ENCODE measurements at regions of chr19 and their contacts with region 1.

Region 1: GRCh38 chr19:23395041-23395721 is at the start of gene ZNF91:
- DNase-seq: peak; percentile 76 to 97 (median 90)
- ATAC-seq: peak; percentile 94
- H3K4me3 ChIP-seq: peak within 1 kb of the TSS; percentile 81 to 85
- H3K4me3 Mint-ChIP-seq: peak within 1 kb of the TSS; percentile 98
- H3K27ac ChIP-seq: peak within 1 kb of the TSS; percentile 95 to 96
- H3K27ac Mint-ChIP-seq: peak within 1 kb of the TSS; percentile 99
- H3K4me1 ChIP-seq: peaks cover 30% of the 10 kb centered on the region
- H3K4me1 Mint-ChIP-seq: peaks cover 41% of the 10 kb centered on the region
- H3K27me3 ChIP-seq: no peaks in the 10 kb centered on the region
- H3K27me3 Mint-ChIP-seq: no peaks in the 10 kb centered on the region
- CTCF ChIP-seq: no peak
- total RNA-seq, gene ZNF91: 90.1 to 90.4 TPM

Region 2: GRCh38 chr19:21835810-21836444 is 1559.3 kb before region 1 on chr19 and contains the start of gene ZNF43:
- CTCF ChIA-PET with region 1: no interaction called
- POLR2A ChIA-PET with region 1: interaction called, 3 read pairs
- intact Hi-C with region 1: loop called in 1 of 2 experiments (anchors 10 kb)
- DNase-seq: peak; percentile 85 to 96 (median 93)
- ATAC-seq: peak; percentile 97
- H3K4me3 ChIP-seq: peak within 1 kb of the TSS; percentile 84 to 85
- H3K4me3 Mint-ChIP-seq: peak within 1 kb of the TSS; percentile 98
- H3K27ac ChIP-seq: peak within 1 kb of the TSS; percentile 75 to 84
- H3K27ac Mint-ChIP-seq: peak within 1 kb of the TSS; percentile 97
- H3K4me1 ChIP-seq: peaks cover 9% of the 10 kb centered on the region
- H3K4me1 Mint-ChIP-seq: peaks cover 34% of the 10 kb centered on the region
- H3K27me3 ChIP-seq: no peaks in the 10 kb centered on the region
- H3K27me3 Mint-ChIP-seq: no peaks in the 10 kb centered on the region
- CTCF ChIP-seq: no peak
- total RNA-seq, gene ZNF43: 29.9 to 31.8 TPM

Region 3: DNA sequence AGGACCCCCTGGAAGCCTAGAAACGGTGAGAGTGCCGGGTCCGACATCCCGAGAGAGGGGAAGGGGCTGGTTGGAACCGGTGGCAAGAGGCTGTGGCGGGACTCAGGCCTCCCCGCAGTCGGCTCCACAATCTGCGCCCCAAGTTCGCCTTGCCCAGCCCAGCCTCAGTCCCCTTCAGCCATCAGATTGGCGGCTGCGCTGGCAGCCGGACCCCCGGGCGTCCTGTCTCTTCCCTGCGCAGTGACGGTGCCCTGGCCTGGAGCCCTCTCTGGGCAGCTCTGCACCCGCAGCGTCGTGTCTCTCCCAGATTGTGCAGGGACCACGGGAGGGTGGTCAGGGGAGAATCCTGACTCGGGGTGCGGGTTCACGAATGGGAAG is 760.7 kb before region 1 on chr19:
- CTCF ChIA-PET with region 1: no interaction called
- POLR2A ChIA-PET with region 1: no interaction called
- intact Hi-C with region 1: loop called in 1 of 2 experiments (anchors 5 kb)
- DNase-seq: no peak
- ATAC-seq: no peak
- H3K4me3 ChIP-seq: peak overlapping the region; percentile 53 to 62
- H3K4me3 Mint-ChIP-seq: peak overlapping the region; percentile 91
- H3K27ac ChIP-seq: peak overlapping the region in 1 of 2 experiments; percentile 30
- H3K27ac Mint-ChIP-seq: peak overlapping the region; percentile 79
- H3K4me1 ChIP-seq: no peaks in the 10 kb centered on the region
- H3K4me1 Mint-ChIP-seq: peaks cover 5% of the 10 kb centered on the region
- H3K27me3 ChIP-seq: no peaks in the 10 kb centered on the region
- H3K27me3 Mint-ChIP-seq: no peaks in the 10 kb centered on the region
- CTCF ChIP-seq: no peak

Region 4: DNA sequence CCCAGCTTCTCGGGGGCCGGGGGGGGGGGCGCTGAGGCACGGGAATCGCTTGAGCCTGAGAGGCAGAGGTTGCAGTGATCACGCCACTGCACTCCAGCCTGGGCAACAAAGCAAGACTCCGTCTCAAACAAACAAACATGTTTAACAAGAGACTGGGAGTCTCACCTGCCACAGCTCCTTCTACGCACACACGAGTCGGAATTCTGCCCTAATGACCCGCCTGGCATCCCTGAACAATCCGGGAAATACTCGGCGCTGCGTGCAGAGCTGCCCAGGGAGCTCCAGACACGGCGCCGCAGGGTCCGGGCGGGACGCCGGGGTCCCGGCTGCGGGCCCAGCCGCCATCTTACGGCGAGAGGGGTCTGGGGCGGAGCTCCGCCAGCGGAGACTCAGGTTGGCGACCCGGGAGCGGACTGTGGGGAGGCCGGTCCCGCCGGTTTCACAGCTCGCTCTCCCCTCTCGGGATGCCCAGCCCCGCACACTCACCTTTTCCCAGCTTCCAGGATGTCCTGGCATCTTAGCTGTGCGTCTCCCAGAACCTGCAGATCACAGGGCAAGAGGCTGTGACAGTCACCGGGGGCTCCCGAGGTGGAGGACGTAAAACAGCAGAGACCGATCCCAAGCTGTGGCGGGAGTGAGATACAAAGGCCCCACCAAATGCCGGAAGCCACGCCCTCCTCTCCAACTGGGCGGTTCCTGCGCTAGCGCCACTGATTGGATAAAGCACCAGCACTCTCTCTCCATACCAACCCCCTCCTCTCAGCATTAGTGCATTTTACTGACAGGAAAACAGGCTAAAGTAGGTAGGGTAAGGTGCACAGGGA is 121.4 kb before region 1 on chr19:
- CTCF ChIA-PET with region 1: no interaction called
- POLR2A ChIA-PET with region 1: interaction called, 30 read pairs
- intact Hi-C with region 1: loop called (anchors 1 to 2 kb)
- DNase-seq: peak; percentile 80 to 95 (median 92)
- ATAC-seq: peak; percentile 98
- H3K4me3 ChIP-seq: peak overlapping the region; percentile 80 to 95
- H3K4me3 Mint-ChIP-seq: peak overlapping the region; percentile 98
- H3K27ac ChIP-seq: peak overlapping the region; percentile 78 to 83
- H3K27ac Mint-ChIP-seq: peak overlapping the region; percentile 97
- H3K4me1 ChIP-seq: peaks cover 8% of the 10 kb centered on the region
- H3K4me1 Mint-ChIP-seq: peaks cover 35% of the 10 kb centered on the region
- H3K27me3 ChIP-seq: no peaks in the 10 kb centered on the region
- H3K27me3 Mint-ChIP-seq: no peaks in the 10 kb centered on the region
- CTCF ChIP-seq: no peak

Region 5: GRCh38 chr19:23686621-23687423 is 291.6 kb after region 1 on chr19 and contains the start of gene ZNF675:
- CTCF ChIA-PET with region 1: no interaction called
- POLR2A ChIA-PET with region 1: interaction called, 10 read pairs
- intact Hi-C with region 1: loop called (anchors 5 kb)
- DNase-seq: peak; percentile 73 to 95 (median 89)
- ATAC-seq: peak; percentile 92
- H3K4me3 ChIP-seq: peak within 1 kb of the TSS; percentile 76 to 99
- H3K4me3 Mint-ChIP-seq: peak within 1 kb of the TSS; percentile 99
- H3K27ac ChIP-seq: peak within 1 kb of the TSS; percentile 90 to 93
- H3K27ac Mint-ChIP-seq: peak within 1 kb of the TSS; percentile 98
- H3K4me1 ChIP-seq: peaks cover 20% of the 10 kb centered on the region
- H3K4me1 Mint-ChIP-seq: peaks cover 52% of the 10 kb centered on the region
- H3K27me3 ChIP-seq: no peaks in the 10 kb centered on the region
- H3K27me3 Mint-ChIP-seq: no peaks in the 10 kb centered on the region
- CTCF ChIP-seq: no peak
- total RNA-seq, gene ZNF675: 19.5 to 20.5 TPM

Region 6: GRCh38 chr19:23914402-23915301 is 519.5 kb after region 1 on chr19 and contains the start of gene ZNF726:
- CTCF ChIA-PET with region 1: no interaction called
- POLR2A ChIA-PET with region 1: interaction called, 7 read pairs
- intact Hi-C with region 1: loop called (anchors 1 to 5 kb)
- DNase-seq: peak; percentile 74 to 94 (median 86)
- ATAC-seq: peak; percentile 98
- H3K4me3 ChIP-seq: peak within 1 kb of the TSS; percentile 56 to 72
- H3K4me3 Mint-ChIP-seq: peak within 1 kb of the TSS; percentile 94
- H3K27ac ChIP-seq: peak within 1 kb of the TSS; percentile 43 to 47
- H3K27ac Mint-ChIP-seq: peak within 1 kb of the TSS; percentile 88
- H3K4me1 ChIP-seq: peaks cover 6% of the 10 kb centered on the region
- H3K4me1 Mint-ChIP-seq: peaks cover 13% of the 10 kb centered on the region
- H3K27me3 ChIP-seq: no peaks in the 10 kb centered on the region
- H3K27me3 Mint-ChIP-seq: no peaks in the 10 kb centered on the region
- CTCF ChIP-seq: no peak
- total RNA-seq, gene ZNF726: 3.5 to 4.4 TPM

Region 7: GRCh38 chr19:24086974-24087595 is 691.9 kb after region 1 on chr19 and contains the start of gene ZNF254:
- CTCF ChIA-PET with region 1: no interaction called
- POLR2A ChIA-PET with region 1: interaction called, 6 read pairs
- intact Hi-C with region 1: loop called (anchors 5 to 10 kb)
- DNase-seq: peak; percentile 58 to 91 (median 78)
- ATAC-seq: peak; percentile 99
- H3K4me3 ChIP-seq: peak within 1 kb of the TSS; percentile 70 to 99
- H3K4me3 Mint-ChIP-seq: peak within 1 kb of the TSS; percentile 96
- H3K27ac ChIP-seq: peak within 1 kb of the TSS; percentile 80 to 92
- H3K27ac Mint-ChIP-seq: peak within 1 kb of the TSS; percentile 97
- H3K4me1 ChIP-seq: peaks cover 10% of the 10 kb centered on the region
- H3K4me1 Mint-ChIP-seq: peaks cover 24% of the 10 kb centered on the region
- H3K27me3 ChIP-seq: no peaks in the 10 kb centered on the region
- H3K27me3 Mint-ChIP-seq: no peaks in the 10 kb centered on the region
- CTCF ChIP-seq: no peak
- total RNA-seq, gene ZNF254: 11.2 to 14.2 TPM